ENCODE measurements at regions of chr5 and their contacts with region 1.

Region 1: DNA sequence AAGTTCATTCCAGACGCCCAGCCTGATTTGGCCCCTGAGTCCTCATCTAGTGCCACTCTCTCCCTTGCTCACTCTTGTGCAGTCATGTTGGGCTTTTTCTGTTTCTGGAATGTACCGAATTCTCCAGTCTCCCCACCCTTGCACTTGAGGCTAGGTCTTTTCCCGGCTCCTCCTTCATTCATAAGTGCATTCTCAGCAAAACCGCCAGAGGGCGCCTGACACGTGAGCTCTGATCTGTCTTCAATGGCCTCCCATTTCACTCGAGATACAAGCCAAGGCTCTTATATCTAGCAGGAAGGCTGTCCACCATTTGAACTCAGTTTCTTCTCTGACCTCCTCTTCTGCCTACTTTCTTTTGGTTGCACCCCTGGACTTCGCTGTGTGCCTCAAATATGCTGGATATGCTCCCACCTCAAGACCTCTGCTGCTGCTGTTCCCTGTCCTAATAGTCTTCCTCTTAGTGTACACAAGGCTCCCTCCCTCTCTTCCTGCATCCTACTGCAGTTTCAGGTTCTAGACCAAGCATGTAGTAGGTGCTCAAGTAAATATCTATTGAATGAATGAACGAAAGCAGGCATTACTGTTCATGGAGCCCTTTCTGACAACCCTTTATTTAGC is 568.1 kb upstream of the WWC1 start:
- DNase-seq: peak; percentile 94
- H3K4me3 Mint-ChIP-seq: no peak overlapping the region
- H3K27ac Mint-ChIP-seq: peak overlapping the region; percentile 1
- H3K4me1 Mint-ChIP-seq: peaks cover 9% of the 10 kb centered on the region
- H3K27me3 Mint-ChIP-seq: no peaks in the 10 kb centered on the region
- CTCF ChIP-seq: peak; percentile 93

Region 2: GRCh38 chr5:167582283-167582682 is 141.1 kb before region 1 on chr5:
- CTCF ChIA-PET with region 1: interaction called, 5 read pairs
- POLR2A ChIA-PET with region 1: no interaction called
- intact Hi-C with region 1: loop called (anchors 1 kb)
- DNase-seq: peak; percentile 52
- H3K4me3 Mint-ChIP-seq: no peak overlapping the region
- H3K27ac Mint-ChIP-seq: no peak overlapping the region
- H3K4me1 Mint-ChIP-seq: peaks cover 2% of the 10 kb centered on the region
- H3K27me3 Mint-ChIP-seq: peaks cover 33% of the 10 kb centered on the region
- CTCF ChIP-seq: peak; percentile 68

Region 3: GRCh38 chr5:167709625-167710024 is 13.7 kb before region 1 on chr5:
- CTCF ChIA-PET with region 1: interaction called, 14 read pairs
- POLR2A ChIA-PET with region 1: interaction called, 10 read pairs
- intact Hi-C with region 1: no loop called
- DNase-seq: no peak
- H3K4me3 Mint-ChIP-seq: no peak overlapping the region
- H3K27ac Mint-ChIP-seq: no peak overlapping the region
- H3K4me1 Mint-ChIP-seq: peaks cover 10% of the 10 kb centered on the region
- H3K27me3 Mint-ChIP-seq: no peaks in the 10 kb centered on the region
- CTCF ChIP-seq: no peak

Region 4: DNA sequence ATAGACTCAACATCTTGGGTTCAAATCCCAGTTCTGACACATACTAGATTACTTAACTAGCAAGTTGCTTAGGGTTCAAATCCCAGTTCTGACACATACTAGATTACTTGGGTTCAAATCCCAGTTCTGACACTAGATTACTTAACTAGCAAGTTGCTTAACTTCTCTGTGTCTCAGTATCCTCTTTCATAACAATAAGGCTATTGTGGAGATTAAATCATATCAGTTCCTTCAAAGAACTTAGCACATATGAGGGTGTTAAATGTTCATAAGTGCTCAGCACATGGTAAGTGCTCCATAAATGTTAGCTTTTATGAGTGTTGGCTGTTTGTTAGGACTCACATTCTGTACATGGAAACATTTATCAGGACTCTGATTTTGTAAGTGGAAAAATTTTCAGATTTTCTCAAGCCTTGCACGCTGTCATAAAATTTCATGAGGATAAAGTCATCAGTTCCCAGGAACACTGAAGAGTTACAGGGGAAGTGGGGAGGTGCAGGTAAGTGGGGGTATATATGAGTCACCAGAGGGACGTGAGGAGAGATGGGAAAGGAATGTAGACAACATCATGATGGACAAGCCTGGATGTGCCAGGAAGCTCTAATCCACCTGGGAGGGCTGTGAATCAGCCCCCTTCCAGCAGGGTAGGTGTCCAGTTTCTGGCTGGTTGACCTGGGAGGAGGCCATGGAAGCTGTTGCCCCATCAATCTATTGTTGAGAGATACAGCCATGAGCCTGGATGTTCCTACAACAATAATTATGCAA is 35.9 kb after region 1 on chr5:
- CTCF ChIA-PET with region 1: interaction called, 12 read pairs
- POLR2A ChIA-PET with region 1: interaction called, 4 read pairs
- intact Hi-C with region 1: no loop called
- DNase-seq: peak; percentile 99
- H3K4me3 Mint-ChIP-seq: no peak overlapping the region
- H3K27ac Mint-ChIP-seq: peak overlapping the region; percentile 26
- H3K4me1 Mint-ChIP-seq: peaks cover 20% of the 10 kb centered on the region
- H3K27me3 Mint-ChIP-seq: no peaks in the 10 kb centered on the region
- CTCF ChIP-seq: no peak

Region 5: DNA sequence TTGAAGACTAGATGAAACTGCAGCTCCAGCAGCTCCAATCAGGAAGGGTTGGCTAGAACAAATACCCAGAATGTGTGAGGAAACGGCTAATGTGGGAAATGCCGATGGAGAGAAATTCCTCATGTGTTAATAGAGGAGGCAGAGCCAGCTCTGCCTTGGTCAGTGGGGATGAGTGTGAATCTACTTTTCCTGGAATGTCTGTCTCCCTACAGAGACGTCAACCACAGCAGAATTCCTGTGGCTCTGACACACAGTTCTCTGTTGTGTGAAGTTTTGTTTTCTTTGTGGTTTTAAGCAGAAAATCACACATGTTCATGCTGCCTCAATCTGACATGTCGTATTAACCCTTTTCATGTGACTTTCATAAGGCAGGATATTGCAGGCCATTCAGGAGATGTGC is 91.5 kb after region 1 on chr5:
- CTCF ChIA-PET with region 1: interaction called, 9 read pairs
- POLR2A ChIA-PET with region 1: interaction called, 3 read pairs
- intact Hi-C with region 1: loop called (anchors 5 kb)
- DNase-seq: peak; percentile 95
- H3K4me3 Mint-ChIP-seq: peak overlapping the region; percentile 11
- H3K27ac Mint-ChIP-seq: peak overlapping the region; percentile 93
- H3K4me1 Mint-ChIP-seq: peaks cover 33% of the 10 kb centered on the region
- H3K27me3 Mint-ChIP-seq: no peaks in the 10 kb centered on the region
- CTCF ChIP-seq: no peak

Region 6: DNA sequence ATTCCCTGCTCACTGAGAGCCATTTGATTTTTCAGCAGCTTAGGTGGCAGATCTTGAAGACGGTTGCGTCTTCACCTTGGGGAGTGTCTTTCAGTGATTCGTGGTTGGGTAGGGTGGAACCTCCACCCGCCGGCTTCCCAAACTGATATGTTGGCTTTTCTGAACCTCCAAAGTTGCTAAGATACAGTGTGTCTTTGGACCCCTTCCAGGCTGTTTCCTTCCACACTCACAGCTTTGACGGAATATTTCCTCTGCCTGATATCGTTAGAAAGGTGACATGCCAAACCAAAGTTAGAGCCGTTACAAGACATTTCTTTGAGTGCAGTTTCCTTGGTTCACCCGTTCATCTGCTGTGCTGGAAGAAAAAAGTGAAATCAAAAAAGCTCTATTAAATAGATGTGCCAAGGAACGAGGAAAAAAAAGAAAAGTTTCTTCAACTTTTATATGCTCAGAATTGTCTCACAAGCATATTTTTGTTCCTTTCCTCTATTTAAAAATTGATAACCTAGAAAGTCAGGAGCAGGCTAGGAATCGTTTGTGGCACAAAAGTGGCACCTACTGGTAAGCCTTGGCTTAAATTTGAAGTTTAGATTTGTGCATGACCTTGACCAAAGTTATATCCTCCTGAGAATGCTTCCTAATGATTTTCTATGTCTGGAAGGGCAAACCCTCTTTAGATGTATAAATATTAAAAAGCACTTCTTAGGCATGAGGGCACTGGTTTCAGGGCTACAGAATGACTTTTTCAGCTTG is 297.4 kb after region 1 on chr5:
- CTCF ChIA-PET with region 1: interaction called, 22 read pairs
- POLR2A ChIA-PET with region 1: interaction called, 3 read pairs
- intact Hi-C with region 1: loop called (anchors 1 kb)
- DNase-seq: peak; percentile 31
- H3K4me3 Mint-ChIP-seq: no peak overlapping the region
- H3K27ac Mint-ChIP-seq: no peak overlapping the region
- H3K4me1 Mint-ChIP-seq: no peaks in the 10 kb centered on the region
- H3K27me3 Mint-ChIP-seq: no peaks in the 10 kb centered on the region
- CTCF ChIP-seq: peak; percentile 59

Measured in MCF 10A (cell line).